Astrocyte of the cerebellum (primary cell): ENCODE measurements at regions of chr21 and their contacts with region 1.

Region 1: GRCh38 chr21:38511662-38512243 is 13.5 kb upstream of the ERG start:
- DNase-seq: no peak
- H3K4me3 ChIP-seq: no peak overlapping the region
- CTCF ChIP-seq: no peak

Region 2: GRCh38 chr21:38567335-38567969 is 55.7 kb after region 1 on chr21:
- in situ Hi-C with region 1: loop called (anchors 5 kb)
- DNase-seq: peak; percentile 16
- H3K4me3 ChIP-seq: no peak overlapping the region
- CTCF ChIP-seq: no peak